Activated B cell treated with CpG ODN at 0.5 μM for 24 hours (primary cell): ENCODE measurements at regions of chr2 and their contacts with region 1.

Region 1: GRCh38 chr2:96208143-96209010 is at the start of gene STARD7:
- DNase-seq: peak; percentile 96
- ATAC-seq: peak; percentile 89
- H3K4me3 Mint-ChIP-seq: peak within 1 kb of the TSS; percentile 92
- H3K27ac Mint-ChIP-seq: peak within 1 kb of the TSS; percentile 91
- H3K4me1 Mint-ChIP-seq: peaks cover 74% of the 10 kb centered on the region
- H3K27me3 Mint-ChIP-seq: no peaks in the 10 kb centered on the region
- CTCF ChIP-seq: no peak
- total RNA-seq, gene STARD7: 148 and 158 TPM in 2 replicates

Region 2: DNA sequence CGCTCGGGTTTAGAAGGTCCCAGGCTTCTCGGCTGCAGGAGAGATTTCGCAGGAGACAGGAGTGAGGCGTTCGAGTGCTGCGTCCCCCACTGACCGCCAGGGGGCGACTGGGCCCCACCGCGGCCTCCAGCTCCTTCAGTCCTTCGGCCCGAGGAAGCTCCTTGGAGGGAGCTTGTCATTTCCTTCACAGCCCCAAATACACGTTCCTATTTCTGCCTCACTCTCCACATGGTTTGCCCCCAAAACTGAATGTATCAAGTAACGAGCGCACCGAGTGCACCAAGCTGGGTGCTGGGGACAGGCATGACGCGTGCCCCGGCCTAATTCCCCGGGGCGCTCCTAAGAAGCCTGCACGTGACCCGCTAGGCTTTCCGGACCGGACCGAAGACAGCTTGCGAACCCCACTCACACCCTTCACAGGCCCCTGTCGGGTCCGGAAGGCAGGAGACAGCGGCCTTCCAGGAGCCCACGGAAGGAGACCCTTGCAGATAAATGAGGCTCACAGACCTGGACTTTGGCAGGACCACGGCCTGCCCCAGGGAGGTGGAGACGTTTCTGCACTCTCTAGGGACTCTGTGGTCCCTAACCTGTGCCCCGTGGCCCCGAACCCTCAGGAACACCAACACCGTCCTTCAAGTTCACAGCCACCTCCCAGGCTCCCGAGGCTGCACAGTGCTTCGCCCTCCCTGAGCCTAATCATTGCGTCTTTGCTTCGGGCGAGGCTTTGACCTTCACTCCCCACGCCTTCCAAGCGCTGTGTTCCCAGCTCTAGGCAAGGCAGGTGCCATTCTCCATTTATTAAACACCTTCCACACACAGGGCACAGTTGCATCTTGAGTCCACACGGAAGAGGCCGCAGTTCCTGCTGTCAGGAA is 818.9 kb before region 1 on chr2:
- CTCF ChIA-PET with region 1: no interaction called
- POLR2A ChIA-PET with region 1: no interaction called
- intact Hi-C with region 1: no loop called
- DNase-seq: no peak
- ATAC-seq: no peak
- H3K4me3 Mint-ChIP-seq: no peak overlapping the region
- H3K27ac Mint-ChIP-seq: no peak overlapping the region
- H3K4me1 Mint-ChIP-seq: no peaks in the 10 kb centered on the region
- H3K27me3 Mint-ChIP-seq: peaks cover 8% of the 10 kb centered on the region
- CTCF ChIP-seq: no peak

Region 3: DNA sequence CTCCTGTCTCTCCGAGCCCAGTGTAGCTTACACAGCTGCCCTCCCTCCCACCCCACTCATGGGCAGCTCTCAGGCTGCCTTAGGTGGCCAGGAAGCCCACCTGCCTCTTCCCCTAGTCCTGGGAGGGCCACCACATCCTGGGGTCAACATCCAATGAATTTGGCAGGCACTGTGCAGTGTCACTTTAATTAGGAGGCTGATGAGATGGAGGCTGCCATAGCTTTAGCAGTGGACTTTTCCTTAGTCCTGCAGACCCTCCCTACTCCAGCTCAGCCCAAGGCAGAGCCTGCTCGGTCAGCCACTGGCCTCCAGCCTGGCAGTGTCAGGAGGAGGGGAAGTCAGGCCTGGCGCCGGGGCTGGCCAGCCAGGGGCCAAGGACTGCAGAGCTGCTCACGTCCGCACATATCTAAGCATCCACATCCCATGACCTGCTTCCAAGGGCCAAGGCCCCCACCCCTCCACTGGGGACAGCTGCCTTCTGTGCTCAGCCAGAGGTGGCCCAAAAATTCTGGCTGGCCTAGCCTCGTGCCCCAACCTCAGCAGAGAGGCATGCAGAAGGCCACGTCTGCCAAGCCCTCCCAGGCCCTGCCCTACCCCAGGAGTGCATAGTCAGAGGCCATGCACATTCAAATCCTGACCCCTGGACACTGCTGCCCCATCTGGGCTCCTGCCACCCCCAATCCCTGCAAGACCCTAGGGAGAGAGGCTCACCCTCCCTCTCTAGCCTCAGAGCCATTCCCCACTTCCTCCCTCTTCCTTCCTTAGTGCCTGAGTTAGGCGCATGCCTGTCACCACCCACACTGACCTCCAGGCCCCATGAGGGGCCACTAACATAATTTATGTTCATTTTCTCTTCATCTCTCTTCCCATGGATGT is 125.1 kb before region 1 on chr2:
- CTCF ChIA-PET with region 1: no interaction called
- POLR2A ChIA-PET with region 1: no interaction called
- intact Hi-C with region 1: no loop called
- DNase-seq: no peak
- ATAC-seq: no peak
- H3K4me3 Mint-ChIP-seq: no peak overlapping the region
- H3K27ac Mint-ChIP-seq: no peak overlapping the region
- H3K4me1 Mint-ChIP-seq: no peaks in the 10 kb centered on the region
- H3K27me3 Mint-ChIP-seq: peaks cover 20% of the 10 kb centered on the region
- CTCF ChIP-seq: no peak

Region 4: DNA sequence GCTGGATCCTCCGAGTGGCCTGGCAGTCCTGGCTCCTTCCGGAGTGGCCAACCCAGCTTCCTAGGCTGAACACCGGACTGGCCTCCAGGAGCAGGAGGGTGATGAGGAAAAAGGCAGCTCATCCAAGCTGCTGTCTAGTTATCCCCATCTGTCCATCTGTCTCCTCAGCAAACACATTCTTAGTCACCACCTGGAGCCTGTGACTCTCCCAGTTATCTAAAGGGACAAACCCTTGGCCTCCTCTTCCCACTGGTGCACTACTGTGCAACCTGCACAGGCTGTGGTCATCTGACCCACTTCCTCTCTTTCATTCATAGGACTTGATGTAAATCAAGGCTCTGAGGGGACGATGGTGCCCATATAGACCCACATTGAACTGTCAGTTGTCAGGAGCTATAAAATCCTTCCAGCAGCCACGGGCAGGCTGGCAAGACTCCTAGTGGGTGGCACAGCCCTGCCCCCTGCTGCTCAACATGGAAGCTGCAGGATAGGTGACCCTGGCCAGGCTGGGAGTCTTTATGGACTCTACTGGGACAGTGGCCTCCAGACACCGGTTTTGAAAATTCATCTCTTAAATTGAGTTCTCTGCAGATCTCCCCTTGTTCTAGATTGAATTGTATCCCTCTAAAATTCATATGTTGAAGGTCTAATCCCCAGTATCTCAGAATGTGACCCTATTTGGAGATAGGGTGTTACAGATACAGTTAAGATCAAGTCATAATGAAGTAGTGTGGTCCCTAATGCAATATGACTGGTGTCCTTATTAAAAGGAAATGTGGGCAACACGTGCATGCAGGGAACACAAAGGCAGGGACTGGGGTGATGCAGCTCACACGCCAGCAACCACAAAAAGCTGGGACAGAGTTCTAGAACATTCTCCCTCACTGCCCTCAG is 33.9 kb before region 1 on chr2:
- CTCF ChIA-PET with region 1: interaction called, 10 read pairs
- POLR2A ChIA-PET with region 1: interaction called, 11 read pairs
- intact Hi-C with region 1: no loop called
- DNase-seq: peak; percentile 76
- ATAC-seq: peak; percentile 99
- H3K4me3 Mint-ChIP-seq: no peak overlapping the region
- H3K27ac Mint-ChIP-seq: no peak overlapping the region
- H3K4me1 Mint-ChIP-seq: peaks cover 20% of the 10 kb centered on the region
- H3K27me3 Mint-ChIP-seq: no peaks in the 10 kb centered on the region
- CTCF ChIP-seq: peak; percentile 75

Region 5: DNA sequence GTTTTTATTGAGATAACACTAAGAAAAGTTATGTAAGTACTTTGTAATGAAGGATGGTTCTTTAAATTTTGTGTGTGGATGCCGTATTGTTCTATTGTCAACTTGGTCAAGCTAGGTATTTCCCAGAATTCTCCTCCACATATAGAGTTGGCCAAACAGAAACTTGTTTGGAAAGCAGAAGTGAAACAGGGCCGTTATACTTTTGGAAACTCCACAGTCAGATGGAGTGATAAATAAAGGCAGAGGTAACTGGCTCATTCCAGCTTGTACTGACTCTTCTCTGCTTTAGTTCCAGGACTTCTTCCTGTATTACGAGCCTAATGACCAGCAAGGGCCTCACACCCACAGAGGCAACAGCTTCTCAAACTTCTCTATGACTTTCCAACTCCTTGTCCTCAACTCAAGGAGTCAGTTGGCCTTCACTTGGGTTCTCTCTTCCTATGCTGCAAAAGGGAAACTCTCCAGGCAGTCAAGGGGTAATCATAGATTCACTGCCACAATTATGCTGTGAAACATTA is 16.7 kb after region 1 on chr2:
- CTCF ChIA-PET with region 1: no interaction called
- POLR2A ChIA-PET with region 1: interaction called, 63 read pairs
- intact Hi-C with region 1: loop called (anchors 2 kb)
- DNase-seq: no peak
- ATAC-seq: peak; percentile 86
- H3K4me3 Mint-ChIP-seq: peak overlapping the region; percentile 66
- H3K27ac Mint-ChIP-seq: peak overlapping the region; percentile 90
- H3K4me1 Mint-ChIP-seq: peaks cover 13% of the 10 kb centered on the region
- H3K27me3 Mint-ChIP-seq: no peaks in the 10 kb centered on the region
- CTCF ChIP-seq: no peak

Region 6: GRCh38 chr2:96254571-96254970 is 46.2 kb after region 1 on chr2:
- CTCF ChIA-PET with region 1: interaction called, 4 read pairs
- POLR2A ChIA-PET with region 1: interaction called, 40 read pairs
- intact Hi-C with region 1: no loop called
- DNase-seq: no peak
- ATAC-seq: no peak
- H3K4me3 Mint-ChIP-seq: no peak overlapping the region
- H3K27ac Mint-ChIP-seq: no peak overlapping the region
- H3K4me1 Mint-ChIP-seq: peaks cover 50% of the 10 kb centered on the region
- H3K27me3 Mint-ChIP-seq: no peaks in the 10 kb centered on the region
- CTCF ChIP-seq: no peak

Region 7: GRCh38 chr2:96336104-96336775 is 127.9 kb after region 1 on chr2:
- CTCF ChIA-PET with region 1: no interaction called
- POLR2A ChIA-PET with region 1: interaction called, 7 read pairs
- intact Hi-C with region 1: loop called (anchors 2 kb)
- DNase-seq: no peak
- ATAC-seq: no peak
- H3K4me3 Mint-ChIP-seq: peak overlapping the region; percentile 87
- H3K27ac Mint-ChIP-seq: peak overlapping the region; percentile 91
- H3K4me1 Mint-ChIP-seq: peaks cover 36% of the 10 kb centered on the region
- H3K27me3 Mint-ChIP-seq: no peaks in the 10 kb centered on the region
- CTCF ChIP-seq: no peak

Region 8: DNA sequence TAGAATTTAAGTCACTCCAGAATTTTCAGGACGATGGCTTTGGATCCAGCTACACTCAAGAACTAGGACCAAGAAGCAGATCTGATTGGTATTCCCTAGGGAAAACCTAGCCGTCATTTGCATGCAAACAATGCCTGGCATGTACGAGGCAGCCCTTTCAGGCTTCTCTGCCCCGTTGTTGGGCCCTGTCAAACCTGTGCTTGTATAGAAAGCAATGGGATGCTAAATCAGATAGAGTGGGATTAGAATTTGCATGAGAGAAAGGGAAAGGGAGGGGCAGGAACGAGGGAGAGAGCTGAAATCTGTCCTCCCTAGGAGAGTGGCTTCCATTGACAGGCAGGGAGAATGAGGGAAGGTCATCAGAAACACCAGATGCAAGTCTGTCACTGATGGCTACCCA is 356.7 kb after region 1 on chr2:
- CTCF ChIA-PET with region 1: no interaction called
- POLR2A ChIA-PET with region 1: no interaction called
- intact Hi-C with region 1: no loop called
- DNase-seq: no peak
- ATAC-seq: no peak
- H3K4me3 Mint-ChIP-seq: no peak overlapping the region
- H3K27ac Mint-ChIP-seq: no peak overlapping the region
- H3K4me1 Mint-ChIP-seq: no peaks in the 10 kb centered on the region
- H3K27me3 Mint-ChIP-seq: no peaks in the 10 kb centered on the region
- CTCF ChIP-seq: no peak